ENCODE measurements at regions of chr19 and their contacts with region 1.

Region 1: GRCh38 chr19:18007044-18007916 is 690 bp upstream of the ARRDC2 start:
- DNase-seq: peak; percentile 70 to 86
- ATAC-seq: peak; percentile 85

Region 2: GRCh38 chr19:17926044-17926443 is 81.2 kb before region 1 on chr19:
- intact Hi-C with region 1: no loop called
- DNase-seq: no peak
- ATAC-seq: no peak

Region 3: DNA sequence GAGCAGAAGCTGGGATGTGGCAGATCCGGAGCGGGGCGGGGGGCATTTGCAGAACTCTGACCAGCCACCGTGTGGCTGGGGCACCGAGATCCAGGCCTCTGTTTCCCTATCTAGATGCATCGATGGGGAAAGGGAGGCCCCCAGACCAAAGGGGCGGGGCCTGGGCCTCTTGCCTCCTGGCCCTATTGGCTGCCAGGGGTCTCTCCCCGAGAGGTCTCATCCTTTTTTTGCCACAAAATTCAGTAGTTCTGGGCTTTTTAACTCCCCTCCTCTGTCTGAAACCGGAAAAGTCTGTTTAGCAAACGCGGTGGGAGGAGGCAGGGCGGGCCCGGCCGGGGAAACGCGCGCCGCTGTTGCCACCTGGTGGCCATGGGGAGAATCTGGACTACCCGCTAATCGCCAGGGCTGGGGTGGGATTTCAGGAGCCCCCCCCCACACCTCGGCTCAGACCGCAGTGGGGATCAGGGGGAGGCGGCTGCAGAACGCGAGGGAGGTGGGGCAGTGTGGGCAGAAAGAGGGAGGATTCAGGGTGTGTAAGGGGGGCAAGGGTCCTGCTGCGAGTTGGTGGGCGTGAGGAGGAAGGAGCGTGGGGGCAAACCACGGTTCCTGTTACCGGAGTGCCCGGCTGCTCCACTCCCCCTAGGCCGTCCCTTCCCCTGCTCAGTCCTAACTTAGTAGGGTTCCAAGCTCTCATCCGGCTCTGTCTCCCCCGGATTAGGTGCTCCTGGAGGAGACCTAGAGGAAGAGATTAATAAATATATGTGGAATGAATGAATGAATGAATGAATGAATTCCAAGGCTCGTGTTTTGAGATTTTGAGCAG is 51.1 kb after region 1 on chr19:
- intact Hi-C with region 1: loop called (anchors 5 kb)
- DNase-seq: peak; percentile 62 to 84
- ATAC-seq: peak; percentile 93

Region 4: GRCh38 chr19:18160971-18161635 is 153.8 kb after region 1 on chr19:
- intact Hi-C with region 1: loop called in 1 of 2 experiments (anchors 10 kb)
- DNase-seq: peak in 1 of 2 donors; percentile 81
- ATAC-seq: peak; percentile 73